Activated CD4-positive, alpha-beta memory T cell treated with anti-CD3 and anti-CD28 coated beads for 36 hours (primary cell): ENCODE measurements at regions of chr2 and their contacts with region 1.

Region 1: GRCh38 chr2:119517433-119517832 is 6.8 kb downstream of the SCTR start:
- DNase-seq: peak; percentile 57
- H3K4me3 Mint-ChIP-seq: no peak overlapping the region
- H3K27ac Mint-ChIP-seq: no peak overlapping the region
- H3K4me1 Mint-ChIP-seq: no peaks in the 10 kb centered on the region
- H3K27me3 Mint-ChIP-seq: peaks cover 15% of the 10 kb centered on the region

Region 2: DNA sequence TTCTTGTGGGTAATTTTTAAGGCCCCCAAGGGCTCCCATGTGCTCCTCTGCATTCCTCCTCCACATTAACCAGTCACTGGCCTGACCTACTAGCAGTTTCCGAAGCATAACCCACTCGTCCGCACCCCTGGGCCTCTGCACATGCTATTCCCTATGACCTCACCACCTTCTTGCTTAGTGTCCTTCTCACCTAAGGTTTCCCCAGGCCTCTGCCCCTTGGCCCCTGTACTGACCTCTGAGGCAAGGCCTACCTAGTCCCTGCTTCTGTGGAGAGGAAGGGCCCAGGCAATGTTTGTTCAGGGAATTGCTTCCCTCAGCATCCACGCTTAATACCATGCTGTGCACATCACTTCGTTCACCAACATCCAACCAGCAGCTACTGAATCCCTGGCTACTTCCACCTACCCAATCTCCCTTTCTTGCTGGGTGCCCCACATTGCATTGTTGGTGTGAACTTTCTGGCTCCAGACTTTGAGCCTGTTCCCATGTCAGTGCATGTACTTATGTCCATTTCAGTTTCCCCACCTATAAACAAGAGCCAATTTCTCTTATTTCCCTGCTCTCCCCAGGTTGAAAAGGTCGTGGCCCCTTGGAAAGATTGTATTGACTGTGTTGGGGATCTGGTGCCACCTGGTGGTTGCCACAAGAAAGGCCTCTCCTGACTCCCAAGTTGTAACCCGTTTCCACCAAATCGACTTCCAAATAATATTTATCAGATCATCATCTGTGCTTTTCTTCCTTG is 142.3 kb after region 1 on chr2:
- CTCF ChIA-PET with region 1: no interaction called
- POLR2A ChIA-PET with region 1: no interaction called
- intact Hi-C with region 1: loop called (anchors 5 kb)
- DNase-seq: peak; percentile 50
- H3K4me3 Mint-ChIP-seq: no peak overlapping the region
- H3K27ac Mint-ChIP-seq: no peak overlapping the region
- H3K4me1 Mint-ChIP-seq: peaks cover 2% of the 10 kb centered on the region
- H3K27me3 Mint-ChIP-seq: peaks cover 7% of the 10 kb centered on the region